CD8-positive, alpha-beta T cell (primary cell): ENCODE measurements at regions of chr15 and their contacts with region 1.

Region 1: GRCh38 chr15:64153480-64154367 is 2.2 kb downstream of the SNX22 start:
- DNase-seq: peak; percentile 85 to 96 (median 90)
- ATAC-seq: peak; percentile 96
- H3K4me3 ChIP-seq: no peak overlapping the region
- H3K4me3 Mint-ChIP-seq: peak overlapping the region; percentile 70
- H3K27ac ChIP-seq: no peak overlapping the region
- H3K27ac Mint-ChIP-seq: peak overlapping the region; percentile 56
- H3K4me1 ChIP-seq: peaks cover 33% of the 10 kb centered on the region
- H3K4me1 Mint-ChIP-seq: peaks cover 37% of the 10 kb centered on the region
- H3K27me3 ChIP-seq: peaks cover 14 to 20% of the 10 kb centered on the region in 2 experiments
- H3K27me3 Mint-ChIP-seq: peaks cover 3% of the 10 kb centered on the region
- CTCF ChIP-seq: peak; percentile 78

Region 2: GRCh38 chr15:63288778-63289378 is 864.8 kb before region 1 on chr15:
- CTCF ChIA-PET with region 1: no interaction called
- POLR2A ChIA-PET with region 1: no interaction called
- intact Hi-C with region 1: loop called in 1 of 2 experiments (anchors 5 kb)
- DNase-seq: peak in 2 of 9 experiments; percentile 57 to 72
- ATAC-seq: peak; percentile 75
- H3K4me3 ChIP-seq: no peak overlapping the region
- H3K4me3 Mint-ChIP-seq: no peak overlapping the region
- H3K27ac ChIP-seq: peak overlapping the region in 1 of 2 experiments; percentile 0
- H3K27ac Mint-ChIP-seq: no peak overlapping the region
- H3K4me1 ChIP-seq: peaks cover 7% of the 10 kb centered on the region
- H3K4me1 Mint-ChIP-seq: peaks cover 7% of the 10 kb centered on the region
- H3K27me3 ChIP-seq: no peaks in the 10 kb centered on the region
- H3K27me3 Mint-ChIP-seq: no peaks in the 10 kb centered on the region
- CTCF ChIP-seq: peak; percentile 81

Region 3: DNA sequence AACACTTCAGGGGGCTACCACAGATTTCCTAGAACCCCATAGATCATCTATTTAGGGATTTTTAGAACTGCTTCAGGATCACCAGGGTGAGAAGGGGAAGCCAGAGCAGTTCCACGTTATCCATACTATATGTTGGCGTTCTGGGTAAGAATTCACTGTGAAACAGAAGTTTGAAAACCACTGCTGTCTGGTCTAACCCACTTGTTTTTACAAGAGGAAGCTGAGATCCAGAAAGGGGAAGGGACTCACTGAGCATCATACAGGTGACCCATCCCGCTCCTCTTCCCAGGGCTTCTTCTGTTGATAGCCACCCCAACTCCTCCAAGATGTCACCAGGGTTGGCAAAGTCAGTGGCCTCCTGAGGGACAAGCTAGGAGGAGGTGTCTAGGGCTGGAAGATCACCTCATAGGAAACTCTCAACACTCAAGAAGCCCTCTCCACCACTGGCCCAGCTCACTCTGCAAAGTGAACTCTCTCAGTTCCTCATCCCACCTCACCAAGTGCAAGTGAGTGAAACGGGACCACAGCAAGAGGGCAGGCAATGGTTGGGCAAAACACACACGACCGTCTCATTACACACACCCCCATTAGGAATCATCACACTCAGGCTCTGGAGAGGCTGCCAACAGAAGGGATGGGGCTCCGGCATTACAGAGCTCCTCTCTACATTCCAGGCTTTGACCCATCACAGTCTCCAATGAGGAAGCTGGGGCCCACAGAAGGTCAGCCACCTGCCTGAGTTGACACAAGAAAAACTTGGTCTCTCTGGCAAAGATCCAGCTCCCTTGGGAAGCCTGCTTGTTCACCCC is 109.2 kb before region 1 on chr15:
- CTCF ChIA-PET with region 1: no interaction called
- POLR2A ChIA-PET with region 1: no interaction called
- intact Hi-C with region 1: no loop called
- DNase-seq: peak in 1 of 9 experiments; percentile 14
- ATAC-seq: no peak
- H3K4me3 ChIP-seq: no peak overlapping the region
- H3K4me3 Mint-ChIP-seq: peak overlapping the region; percentile 78
- H3K27ac ChIP-seq: no peak overlapping the region
- H3K27ac Mint-ChIP-seq: no peak overlapping the region
- H3K4me1 ChIP-seq: peaks cover 6% of the 10 kb centered on the region
- H3K4me1 Mint-ChIP-seq: peaks cover 8% of the 10 kb centered on the region
- H3K27me3 ChIP-seq: no peaks in the 10 kb centered on the region
- H3K27me3 Mint-ChIP-seq: peaks cover 2% of the 10 kb centered on the region
- CTCF ChIP-seq: no peak

Region 4: DNA sequence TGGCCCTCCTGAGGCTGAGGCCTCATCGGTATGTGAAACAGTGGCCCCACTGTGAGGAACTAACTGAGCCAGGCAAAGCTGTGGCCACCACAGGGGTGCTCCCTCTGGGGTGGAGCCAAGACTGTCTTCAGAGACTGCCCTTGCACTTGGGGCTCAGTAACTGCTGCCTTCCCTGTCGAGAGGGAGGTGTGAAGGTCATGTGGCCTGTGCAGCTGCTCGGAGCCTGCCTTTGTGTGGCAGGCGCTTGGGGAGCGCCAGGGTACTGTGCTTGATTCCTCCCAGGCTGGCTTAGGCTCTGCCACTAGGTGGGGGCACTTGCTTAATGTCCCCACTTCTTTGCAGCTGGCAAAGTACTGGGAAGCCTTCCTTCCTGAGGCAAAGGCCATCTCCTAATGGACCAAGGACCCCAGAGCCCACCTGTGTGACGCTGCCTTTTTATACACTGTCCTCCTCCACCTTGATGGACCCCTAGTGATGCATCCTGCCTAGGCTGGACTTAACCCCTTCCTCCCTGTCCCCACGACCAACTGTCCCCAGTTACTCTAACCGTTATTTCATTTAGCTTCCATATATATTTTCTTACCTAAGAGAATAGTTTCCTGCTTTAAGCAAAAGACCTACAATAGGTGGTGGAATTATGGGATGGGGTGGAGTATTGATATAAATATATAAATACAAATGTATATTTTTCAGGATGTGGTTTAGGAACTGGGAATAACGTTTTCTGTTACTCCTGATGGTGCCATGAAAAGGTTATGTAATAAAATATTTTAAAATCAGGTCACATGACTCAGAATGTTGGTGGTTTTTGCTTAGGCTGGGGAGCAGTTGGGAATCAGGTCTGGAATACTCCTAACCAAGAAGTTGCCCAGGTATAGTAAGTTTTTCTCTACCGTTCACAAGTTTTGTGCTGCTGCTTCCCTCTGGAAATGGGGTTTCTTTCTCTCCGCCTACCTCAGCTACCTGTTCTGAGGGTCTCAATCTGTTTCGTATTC is 16.2 kb before region 1 on chr15:
- CTCF ChIA-PET with region 1: interaction called, 15 read pairs
- POLR2A ChIA-PET with region 1: interaction called, 3 read pairs
- intact Hi-C with region 1: no loop called
- DNase-seq: peak in 1 of 9 experiments; percentile 32
- ATAC-seq: peak; percentile 42
- H3K4me3 ChIP-seq: no peak overlapping the region
- H3K4me3 Mint-ChIP-seq: no peak overlapping the region
- H3K27ac ChIP-seq: no peak overlapping the region
- H3K27ac Mint-ChIP-seq: no peak overlapping the region
- H3K4me1 ChIP-seq: no peaks in the 10 kb centered on the region
- H3K4me1 Mint-ChIP-seq: no peaks in the 10 kb centered on the region
- H3K27me3 ChIP-seq: no peaks in the 10 kb centered on the region
- H3K27me3 Mint-ChIP-seq: no peaks in the 10 kb centered on the region
- CTCF ChIP-seq: no peak

Region 5: GRCh38 chr15:64180235-64180837 is 26.6 kb after region 1 on chr15:
- CTCF ChIA-PET with region 1: interaction called, 11 read pairs
- POLR2A ChIA-PET with region 1: no interaction called
- intact Hi-C with region 1: no loop called
- DNase-seq: peak in 1 of 9 experiments; percentile 24
- ATAC-seq: no peak
- H3K4me3 ChIP-seq: no peak overlapping the region
- H3K4me3 Mint-ChIP-seq: no peak overlapping the region
- H3K27ac ChIP-seq: no peak overlapping the region
- H3K27ac Mint-ChIP-seq: no peak overlapping the region
- H3K4me1 ChIP-seq: no peaks in the 10 kb centered on the region
- H3K4me1 Mint-ChIP-seq: no peaks in the 10 kb centered on the region
- H3K27me3 ChIP-seq: no peaks in the 10 kb centered on the region
- H3K27me3 Mint-ChIP-seq: no peaks in the 10 kb centered on the region
- CTCF ChIP-seq: no peak